Dendritic cell treated with granulocyte-macrophage colony-stimulating factor and Interleukin-4, amounts not matched to agents 40 ng/mL and 50 ng/mL, for 4 days (primary cell): ENCODE measurements at regions of chr20 and their contacts with region 1.

Region 1: DNA sequence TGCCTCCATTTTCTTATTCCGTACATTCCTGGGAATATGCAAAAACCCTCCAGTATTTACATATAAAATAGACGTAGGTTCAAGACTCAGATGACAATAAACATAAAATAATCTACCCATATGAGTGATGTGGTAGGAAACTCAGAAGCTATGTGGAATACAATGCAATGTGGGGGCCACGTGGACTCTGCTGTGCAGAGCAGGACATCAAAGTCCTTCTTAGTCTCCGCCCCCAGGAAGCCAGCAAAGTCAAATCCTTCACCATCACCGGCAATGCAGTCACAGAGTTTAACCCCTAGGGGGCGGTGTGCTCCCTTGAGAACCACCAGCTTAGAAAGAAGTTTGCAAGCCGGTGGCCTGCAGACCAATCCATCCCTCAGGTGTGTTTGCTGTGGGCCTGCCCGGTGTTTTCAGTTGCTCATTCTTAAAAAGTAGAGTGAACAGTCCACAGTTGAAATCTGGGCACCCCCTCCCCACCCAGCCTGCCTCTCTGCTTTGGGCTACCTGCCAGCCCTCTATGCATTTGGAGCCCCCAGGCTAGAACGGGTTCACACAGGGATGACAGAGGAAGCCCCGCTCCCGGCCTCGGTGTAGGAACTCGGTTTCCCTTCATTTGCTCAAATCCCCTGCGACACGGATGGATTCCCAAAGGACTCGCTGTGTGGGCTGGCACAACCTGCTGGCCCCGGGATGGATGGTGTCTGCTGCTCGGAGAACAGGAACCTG is 59.9 kb downstream of the SULF2 start:
- H3K4me3 Mint-ChIP-seq: no peak overlapping the region
- H3K27ac Mint-ChIP-seq: peak overlapping the region; percentile 92
- H3K4me1 Mint-ChIP-seq: peaks cover 94% of the 10 kb centered on the region
- H3K27me3 Mint-ChIP-seq: no peaks in the 10 kb centered on the region

Region 2: DNA sequence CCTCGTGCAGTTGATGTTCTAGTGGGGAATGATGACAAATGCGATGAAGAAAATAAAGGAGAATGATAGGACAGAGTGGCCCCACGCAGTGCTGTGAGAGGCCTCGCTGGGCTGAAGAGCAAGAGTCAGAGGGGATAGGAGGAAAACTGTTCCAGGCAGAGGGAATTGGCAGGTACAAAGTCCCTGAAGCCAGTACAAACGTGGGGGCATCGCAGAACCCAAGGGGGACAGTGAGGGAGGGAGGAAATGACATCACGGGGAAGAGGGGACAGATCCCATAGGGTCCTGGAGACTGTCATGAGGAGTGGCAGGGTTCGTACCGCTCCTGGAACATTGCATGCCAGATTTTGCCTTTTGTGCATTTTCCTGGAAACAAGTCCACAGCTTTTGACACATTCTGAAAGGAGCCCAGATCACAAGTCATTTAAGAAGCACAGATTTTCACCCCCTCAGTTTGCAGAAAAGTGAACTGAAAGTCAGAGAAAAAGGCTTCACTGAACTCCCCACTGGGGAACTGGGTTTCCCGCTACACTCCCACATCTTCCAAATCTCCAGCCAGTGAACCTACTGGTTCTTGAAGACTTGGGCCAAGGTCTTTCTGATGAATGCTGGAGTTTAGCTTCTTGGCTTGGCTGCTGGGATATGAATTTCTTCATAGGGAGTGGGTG is 17.1 kb before region 1 on chr20:
- intact Hi-C with region 1: loop called (anchors 2 kb)
- H3K4me3 Mint-ChIP-seq: no peak overlapping the region
- H3K27ac Mint-ChIP-seq: peak overlapping the region; percentile 93
- H3K4me1 Mint-ChIP-seq: peaks cover 97% of the 10 kb centered on the region
- H3K27me3 Mint-ChIP-seq: no peaks in the 10 kb centered on the region

Region 3: DNA sequence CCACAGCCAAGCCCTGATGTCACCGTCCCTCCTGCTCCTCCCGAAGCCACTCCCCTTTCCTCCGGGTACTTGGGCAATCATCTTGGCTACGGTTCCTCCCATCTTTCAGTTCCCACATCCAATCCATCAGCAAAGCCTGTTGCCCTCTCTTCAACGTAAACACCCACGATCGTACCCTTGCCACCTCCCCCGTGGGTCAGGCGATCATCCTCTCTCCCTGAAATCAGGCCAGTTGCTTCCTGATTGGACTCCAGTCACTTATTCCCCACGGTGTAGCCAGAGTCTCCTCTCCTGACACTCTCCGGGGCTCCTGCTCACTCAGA is 15.4 kb after region 1 on chr20:
- intact Hi-C with region 1: loop called (anchors 1 kb)
- H3K4me3 Mint-ChIP-seq: peak overlapping the region; percentile 50
- H3K27ac Mint-ChIP-seq: peak overlapping the region; percentile 91
- H3K4me1 Mint-ChIP-seq: peaks cover 81% of the 10 kb centered on the region
- H3K27me3 Mint-ChIP-seq: no peaks in the 10 kb centered on the region

Region 4: GRCh38 chr20:47767972-47768794 is 42.8 kb after region 1 on chr20:
- intact Hi-C with region 1: loop called (anchors 1 kb)
- H3K4me3 Mint-ChIP-seq: peak overlapping the region; percentile 47
- H3K27ac Mint-ChIP-seq: peak overlapping the region; percentile 92
- H3K4me1 Mint-ChIP-seq: peaks cover 97% of the 10 kb centered on the region
- H3K27me3 Mint-ChIP-seq: no peaks in the 10 kb centered on the region

Region 5: DNA sequence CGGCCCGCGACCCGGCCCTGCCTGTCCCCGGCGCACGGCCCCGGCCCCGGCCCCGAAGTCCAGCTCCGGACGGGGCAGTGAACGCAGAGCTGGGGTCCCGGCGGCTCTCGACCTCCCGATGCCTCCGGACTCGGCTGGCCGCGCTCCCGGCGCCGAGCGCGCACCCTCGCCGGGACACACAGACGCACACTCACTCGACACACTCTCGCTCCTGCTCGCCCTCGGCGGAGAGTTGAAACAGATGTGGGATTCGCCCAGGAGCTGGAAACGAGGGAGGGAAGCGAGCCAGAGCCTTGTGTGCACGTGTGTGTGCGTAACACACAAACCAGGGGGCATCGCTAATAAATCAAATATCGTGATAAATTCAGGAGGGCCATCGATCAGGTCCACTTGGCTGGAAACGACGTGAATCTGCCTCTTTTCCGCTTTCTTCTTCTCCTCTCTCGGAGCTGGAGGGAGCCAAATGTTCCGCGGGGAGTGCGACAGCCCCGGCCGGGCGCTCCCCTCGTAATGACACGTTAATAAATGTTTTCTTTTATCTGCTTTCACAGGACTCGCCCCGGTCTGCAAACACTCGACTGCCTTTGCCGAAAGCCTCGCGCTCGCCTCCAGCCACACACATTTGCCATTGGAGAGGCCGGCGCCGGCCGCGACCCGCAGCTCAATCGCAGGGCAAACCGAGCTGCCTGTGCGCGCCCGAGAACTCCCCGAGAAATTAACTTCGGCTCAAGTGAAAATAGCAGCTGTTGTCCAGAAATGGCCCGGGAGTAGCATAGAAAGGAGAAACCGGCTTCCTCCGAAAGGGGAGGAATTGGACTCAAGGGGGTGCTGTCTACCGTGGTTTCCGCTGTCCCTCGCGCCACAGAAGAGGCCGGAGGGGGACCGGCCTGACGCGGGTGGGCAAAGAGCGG is 60.7 kb after region 1 on chr20:
- intact Hi-C with region 1: loop called (anchors 5 kb)
- H3K4me3 Mint-ChIP-seq: peak overlapping the region; percentile 99
- H3K27ac Mint-ChIP-seq: peak overlapping the region; percentile 86
- H3K4me1 Mint-ChIP-seq: peaks cover 45% of the 10 kb centered on the region
- H3K27me3 Mint-ChIP-seq: peaks cover 27% of the 10 kb centered on the region